ENCODE measurements at regions of chr2 and their contacts with region 1.

Region 1: DNA sequence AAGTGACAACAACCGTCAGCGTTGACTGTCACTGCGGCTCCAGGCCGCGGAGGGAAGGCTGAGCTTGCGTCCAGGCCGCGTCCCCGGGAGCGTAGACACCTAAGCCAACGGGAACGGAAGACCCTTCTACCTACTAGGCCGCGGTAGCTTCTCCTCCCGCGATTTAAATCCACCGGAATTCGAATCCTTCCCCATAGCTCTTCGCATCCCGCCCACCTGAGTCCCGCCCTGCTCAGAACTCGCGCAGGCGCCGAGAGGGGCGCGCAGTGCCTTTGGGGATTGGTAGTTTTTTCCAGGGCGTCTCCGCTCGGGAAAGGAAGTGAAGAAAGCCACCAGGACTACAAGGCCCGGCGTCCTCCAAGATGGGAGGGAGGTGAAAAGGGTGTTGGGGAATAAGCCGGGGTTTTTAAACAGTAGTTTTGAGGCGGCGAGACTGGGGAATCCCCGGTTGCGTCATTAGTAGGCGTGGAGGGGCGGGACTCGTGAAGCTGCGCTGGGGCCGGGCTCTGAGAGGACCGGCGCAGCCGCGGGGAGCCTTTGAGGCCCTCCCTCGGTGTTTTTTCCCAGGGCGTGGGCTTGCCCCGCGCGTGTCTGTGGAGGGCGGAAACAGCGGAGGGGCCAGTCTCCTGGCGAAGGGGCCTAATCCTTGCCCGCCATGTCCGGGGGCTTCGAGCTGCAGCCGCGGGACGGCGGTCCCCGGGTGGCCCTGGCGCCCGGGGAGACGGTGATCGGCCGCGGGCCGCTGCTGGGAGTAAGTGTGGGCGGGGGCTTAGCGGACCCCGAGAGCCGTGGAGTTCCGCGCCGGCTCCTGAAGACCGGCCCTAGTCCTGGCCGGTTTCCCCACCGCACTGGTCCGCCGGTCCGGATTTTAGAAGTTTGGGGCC is at the starts of genes APLF and FBXO48:
- DNase-seq: peak; percentile 97 to 99 (median 98)
- H3K4me3 ChIP-seq: peak within 1 kb of the TSS; percentile 63 to 92 (median 88)
- H3K27ac ChIP-seq: peak within 1 kb of the TSS in 4 of 5 donors; percentile 64 to 86 (median 78)
- H3K4me1 ChIP-seq: peaks cover 6 to 21% of the 10 kb centered on the region in 2 donors
- H3K27me3 ChIP-seq: no peaks in the 10 kb centered on the region
- CTCF ChIP-seq: no peak
- POLR2A ChIP-seq: peak; percentile 50 to 72
- total RNA-seq, gene APLF: 3.0 to 6.8 (median 3.9) TPM
- total RNA-seq, gene FBXO48: 0.42 to 2.7 (median 1.2) TPM

Region 2: GRCh38 chr2:68709421-68709911 is 242.1 kb after region 1 on chr2:
- intact Hi-C with region 1: loop called (anchors 10 kb)
- DNase-seq: peak in 3 of 7 donors; percentile 22 to 35 (median 22)
- H3K4me3 ChIP-seq: no peak overlapping the region
- H3K27ac ChIP-seq: no peak overlapping the region
- H3K4me1 ChIP-seq: no peaks in the 10 kb centered on the region
- H3K27me3 ChIP-seq: no peaks in the 10 kb centered on the region
- CTCF ChIP-seq: peak; percentile 51 to 78 (median 62)
- POLR2A ChIP-seq: no peak

Region 3: GRCh38 chr2:68715353-68716041 is 248.2 kb after region 1 on chr2:
- intact Hi-C with region 1: loop called in 1 of 2 experiments (anchors 10 kb)
- DNase-seq: peak; percentile 58 to 86 (median 72)
- H3K4me3 ChIP-seq: no peak overlapping the region
- H3K27ac ChIP-seq: peak overlapping the region in 3 of 5 donors; percentile 10 to 44 (median 11)
- H3K4me1 ChIP-seq: peaks cover 0 to 7% of the 10 kb centered on the region in 2 donors
- H3K27me3 ChIP-seq: no peaks in the 10 kb centered on the region
- CTCF ChIP-seq: peak; percentile 43 to 74 (median 58)
- POLR2A ChIP-seq: no peak

Region 4: GRCh38 chr2:68751397-68752339 is 284.3 kb after region 1 on chr2:
- intact Hi-C with region 1: no loop called
- DNase-seq: peak; percentile 86 to 97 (median 93)
- H3K4me3 ChIP-seq: no peak overlapping the region
- H3K27ac ChIP-seq: no peak overlapping the region
- H3K4me1 ChIP-seq: peaks cover 0 to 12% of the 10 kb centered on the region in 2 donors
- H3K27me3 ChIP-seq: no peaks in the 10 kb centered on the region
- CTCF ChIP-seq: peak; percentile 83 to 95 (median 91)
- POLR2A ChIP-seq: no peak